Transverse colon (tissue), 4 donors: ENCODE measurements at regions of chr6 and their contacts with region 1.

Region 1: GRCh38 chr6:125191916-125192609 is 38.5 kb downstream of the TPD52L1 start:
- DNase-seq: peak; percentile 69
- H3K4me3 ChIP-seq: no peak overlapping the region
- H3K27ac ChIP-seq: no peak overlapping the region
- H3K4me1 ChIP-seq: peaks cover 0 to 40% (median 11%) of the 10 kb centered on the region in 4 donors
- H3K27me3 ChIP-seq: no peaks in the 10 kb centered on the region
- CTCF ChIP-seq: peak; percentile 65 to 80 (median 75)
- EP300 ChIP-seq: no peak
- POLR2A ChIP-seq: no peak

Region 2: DNA sequence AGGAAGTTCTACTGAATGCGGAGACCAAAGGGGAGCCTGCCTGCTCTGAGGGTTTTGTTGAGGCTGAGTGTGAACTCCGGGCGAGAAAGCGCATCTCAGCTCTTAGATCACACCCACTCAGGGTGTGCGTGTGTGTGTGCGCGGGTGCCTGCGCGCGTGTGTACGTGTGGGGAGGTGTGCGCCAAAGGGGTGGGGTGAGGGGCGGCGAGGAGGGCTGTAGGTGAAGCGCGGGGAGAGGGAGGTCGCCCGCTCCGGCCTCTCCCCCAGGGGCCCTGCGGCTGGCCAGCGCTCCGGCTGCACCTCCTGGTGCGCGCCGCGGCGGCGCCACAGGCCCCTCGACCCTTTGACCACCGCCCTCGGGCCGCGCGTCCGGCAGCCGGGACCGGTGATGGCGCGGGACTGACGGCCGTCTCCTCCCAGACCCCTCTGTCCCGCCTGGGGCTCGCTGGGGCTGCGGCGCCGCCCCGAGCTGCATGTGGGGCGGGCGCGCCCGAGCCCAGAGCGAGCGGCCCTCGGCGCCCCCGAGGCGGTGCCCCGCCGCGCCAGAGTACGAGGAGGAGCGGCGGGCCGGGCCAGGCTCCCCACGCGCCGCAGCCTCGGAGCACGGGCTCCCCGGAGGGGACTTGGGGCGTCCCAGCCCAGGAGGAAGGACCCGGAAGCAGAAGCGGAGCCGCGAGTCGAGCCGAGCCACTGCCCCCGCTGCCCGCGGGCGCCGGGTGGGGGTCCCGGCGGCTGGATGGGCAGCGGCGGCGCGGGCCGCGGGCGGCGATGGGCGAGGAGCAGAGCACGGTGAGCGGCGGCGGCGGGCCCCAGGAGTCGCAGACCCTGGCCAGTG is 230.1 kb before region 1 on chr6 and contains the start of gene RNF217:
- in situ Hi-C with region 1: no loop called
- intact Hi-C with region 1: no loop called
- DNase-seq: peak; percentile 50
- H3K4me3 ChIP-seq: peak within 1 kb of the TSS; percentile 87 to 96 (median 88)
- H3K27ac ChIP-seq: peak within 1 kb of the TSS; percentile 92 to 96 (median 94)
- H3K4me1 ChIP-seq: peaks cover 0 to 39% (median 15%) of the 10 kb centered on the region in 4 donors
- H3K27me3 ChIP-seq: no peaks in the 10 kb centered on the region
- CTCF ChIP-seq: peak in 1 of 5 experiments; percentile 28
- EP300 ChIP-seq: no peak
- POLR2A ChIP-seq: peak; percentile 40
- total RNA-seq, gene RNF217: 6.0 to 24.3 (median 16.0) TPM

Region 3: DNA sequence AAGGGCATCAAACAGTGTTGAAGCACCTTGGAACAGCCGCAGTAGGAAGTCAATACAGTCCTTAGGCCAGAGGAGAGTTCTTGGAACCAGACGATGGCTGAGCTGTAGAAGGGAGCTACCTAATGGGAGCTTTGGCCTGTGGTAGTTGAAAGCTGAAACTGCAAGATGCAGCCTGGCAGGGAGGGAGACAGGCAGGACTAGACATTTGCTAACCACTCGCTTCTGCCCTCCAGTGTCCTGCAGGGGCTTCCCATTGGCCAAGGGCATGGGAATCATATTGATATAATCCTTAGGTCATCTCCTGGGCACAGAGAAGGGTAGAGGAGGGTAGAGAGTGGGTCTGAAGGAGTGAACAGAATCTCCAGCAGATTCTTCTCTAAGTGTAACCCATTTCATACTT is 21.9 kb after region 1 on chr6:
- in situ Hi-C with region 1: no loop called
- intact Hi-C with region 1: no loop called
- DNase-seq: no peak
- H3K4me3 ChIP-seq: no peak overlapping the region
- H3K27ac ChIP-seq: no peak overlapping the region
- H3K4me1 ChIP-seq: no peaks in the 10 kb centered on the region
- H3K27me3 ChIP-seq: no peaks in the 10 kb centered on the region
- CTCF ChIP-seq: no peak
- EP300 ChIP-seq: no peak
- POLR2A ChIP-seq: no peak

Region 4: GRCh38 chr6:125294925-125295324 is 102.9 kb after region 1 on chr6:
- in situ Hi-C with region 1: no loop called
- intact Hi-C with region 1: loop called (anchors 2 kb)
- DNase-seq: no peak
- H3K4me3 ChIP-seq: no peak overlapping the region
- H3K27ac ChIP-seq: no peak overlapping the region
- H3K4me1 ChIP-seq: peaks cover 0 to 7% (median under 1%) of the 10 kb centered on the region in 4 donors
- H3K27me3 ChIP-seq: no peaks in the 10 kb centered on the region
- CTCF ChIP-seq: no peak
- EP300 ChIP-seq: no peak
- POLR2A ChIP-seq: no peak

Region 5: DNA sequence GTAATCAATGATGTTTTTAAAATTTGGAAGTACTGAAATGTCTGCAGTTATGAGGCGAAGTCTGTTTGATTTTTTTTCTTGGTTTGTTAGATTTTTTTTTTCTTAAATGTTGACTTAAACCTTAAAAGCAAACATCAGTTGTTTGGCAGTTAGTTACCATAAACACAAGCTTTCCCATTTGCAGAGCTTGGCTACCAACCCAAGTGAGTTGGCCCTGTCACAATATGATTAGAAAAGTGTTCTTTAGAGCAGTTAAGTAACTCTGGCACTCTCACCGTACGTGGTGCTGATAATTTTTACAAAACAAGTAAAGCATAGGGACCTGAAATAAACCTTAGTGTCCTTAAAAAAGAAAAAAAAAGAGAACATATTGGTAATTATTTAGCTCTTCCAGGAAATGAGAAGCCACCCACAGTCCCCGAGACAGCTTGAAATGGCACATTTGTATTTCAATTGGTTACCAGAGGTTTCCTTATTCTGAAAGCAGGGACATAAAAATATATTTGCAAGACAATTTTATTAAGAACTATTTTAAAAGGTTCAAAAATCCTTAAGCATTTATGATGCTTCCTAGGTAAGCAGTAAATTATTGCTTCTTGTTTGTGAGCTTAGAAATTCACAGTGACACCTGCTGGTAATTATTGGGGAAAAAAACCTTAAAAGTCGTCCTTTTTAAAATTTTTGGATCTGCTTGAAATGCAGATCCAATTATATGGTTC is 561.3 kb after region 1 on chr6:
- in situ Hi-C with region 1: loop called in 1 of 4 experiments (anchors 25 kb)
- intact Hi-C with region 1: no loop called
- DNase-seq: no peak
- H3K4me3 ChIP-seq: no peak overlapping the region
- H3K27ac ChIP-seq: no peak overlapping the region
- H3K4me1 ChIP-seq: peaks cover 6 to 25% (median 14%) of the 10 kb centered on the region in 4 donors
- H3K27me3 ChIP-seq: peaks cover 86% of the 10 kb centered on the region
- CTCF ChIP-seq: peak in 4 of 5 experiments; percentile 18 to 38 (median 32)
- EP300 ChIP-seq: no peak
- POLR2A ChIP-seq: no peak